ENCODE measurements at regions of chr22 and their contacts with region 1.

Region 1: DNA sequence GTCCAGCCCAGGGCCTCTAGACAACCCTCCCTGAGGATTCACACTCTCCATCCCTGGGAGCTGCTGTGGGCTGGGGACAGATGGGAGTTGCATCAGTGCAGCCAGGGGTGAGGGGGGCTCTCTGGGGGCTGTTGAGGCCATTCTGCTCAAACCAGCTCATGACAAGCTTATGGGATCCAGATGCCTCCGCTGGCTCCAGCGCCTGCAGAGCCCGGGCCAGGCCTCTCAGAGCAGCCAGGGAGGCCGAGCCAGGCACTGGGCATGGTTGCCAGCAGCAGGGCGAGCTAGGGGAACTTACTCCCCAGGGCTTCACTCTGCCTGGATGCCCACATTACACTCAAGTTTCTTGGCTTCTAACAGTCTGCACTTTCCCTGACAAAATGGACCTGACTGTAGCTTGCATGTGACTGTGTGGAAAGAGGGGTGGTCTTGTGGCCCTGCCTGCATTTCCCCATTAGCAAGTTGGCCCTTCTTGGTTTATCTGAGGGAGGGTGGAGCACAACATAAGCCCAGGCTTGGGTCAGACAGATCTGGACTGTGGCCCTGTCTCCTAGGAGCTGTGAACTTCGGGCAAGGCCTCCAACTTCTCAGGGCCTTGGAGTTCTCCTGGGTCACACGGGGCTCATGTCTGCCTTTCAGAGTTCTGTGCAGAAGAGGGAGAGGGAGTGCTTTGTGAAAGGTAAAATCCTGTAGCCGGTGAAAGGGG is 34.5 kb upstream of the CYB5R3 start:
- DNase-seq: no peak
- H3K4me3 ChIP-seq: no peak overlapping the region
- H3K27ac ChIP-seq: peak overlapping the region; percentile 91 to 95 (median 94)
- H3K4me1 ChIP-seq: peaks cover 80 to 95% (median 81%) of the 10 kb centered on the region in 4 donors
- H3K27me3 ChIP-seq: no peaks in the 10 kb centered on the region
- CTCF ChIP-seq: no peak
- EP300 ChIP-seq: no peak
- POLR2A ChIP-seq: no peak

Region 2: GRCh38 chr22:42617155-42617963 is 66.4 kb before region 1 on chr22:
- intact Hi-C with region 1: loop called (anchors 2 kb)
- DNase-seq: no peak
- H3K4me3 ChIP-seq: no peak overlapping the region
- H3K27ac ChIP-seq: peak overlapping the region; percentile 95 to 98 (median 96)
- H3K4me1 ChIP-seq: peaks cover 28 to 68% (median 63%) of the 10 kb centered on the region in 4 donors
- H3K27me3 ChIP-seq: no peaks in the 10 kb centered on the region
- CTCF ChIP-seq: no peak
- EP300 ChIP-seq: no peak
- POLR2A ChIP-seq: no peak

Measured in esophagus muscularis mucosa (tissue), 4 donors.